Natural killer cell (primary cell): ENCODE measurements at regions of chr20 and their contacts with region 1.

Region 1: GRCh38 chr20:3000852-3001523 is 42.4 kb upstream of the GNRH2 start:
- DNase-seq: peak in 1 of 2 donors; percentile 68
- ATAC-seq: peak; percentile 73 to 94 (median 80)
- H3K4me3 ChIP-seq: no peak overlapping the region
- H3K4me3 Mint-ChIP-seq: no peak overlapping the region
- H3K27ac ChIP-seq: no peak overlapping the region
- H3K27ac Mint-ChIP-seq: peak overlapping the region in 1 of 2 donors; percentile 16
- H3K4me1 ChIP-seq: no peaks in the 10 kb centered on the region
- H3K4me1 Mint-ChIP-seq: no peaks in the 10 kb centered on the region
- H3K27me3 ChIP-seq: no peaks in the 10 kb centered on the region
- H3K27me3 Mint-ChIP-seq: no peaks in the 10 kb centered on the region
- CTCF ChIP-seq: peak; percentile 63

Region 2: GRCh38 chr20:2752567-2753460 is 248.2 kb before region 1 on chr20:
- intact Hi-C with region 1: loop called (anchors 5 kb)
- DNase-seq: peak; percentile 51 to 77
- ATAC-seq: peak; percentile 35 to 50 (median 48)
- H3K4me3 ChIP-seq: peak overlapping the region; percentile 32
- H3K4me3 Mint-ChIP-seq: peak overlapping the region; percentile 92
- H3K27ac ChIP-seq: no peak overlapping the region
- H3K27ac Mint-ChIP-seq: peak overlapping the region; percentile 45 to 70
- H3K4me1 ChIP-seq: peaks cover 45% of the 10 kb centered on the region
- H3K4me1 Mint-ChIP-seq: peaks cover 30 to 51% of the 10 kb centered on the region in 2 donors
- H3K27me3 ChIP-seq: peaks cover 18% of the 10 kb centered on the region
- H3K27me3 Mint-ChIP-seq: peaks cover 7 to 38% of the 10 kb centered on the region in 2 donors
- CTCF ChIP-seq: peak; percentile 83

Region 3: DNA sequence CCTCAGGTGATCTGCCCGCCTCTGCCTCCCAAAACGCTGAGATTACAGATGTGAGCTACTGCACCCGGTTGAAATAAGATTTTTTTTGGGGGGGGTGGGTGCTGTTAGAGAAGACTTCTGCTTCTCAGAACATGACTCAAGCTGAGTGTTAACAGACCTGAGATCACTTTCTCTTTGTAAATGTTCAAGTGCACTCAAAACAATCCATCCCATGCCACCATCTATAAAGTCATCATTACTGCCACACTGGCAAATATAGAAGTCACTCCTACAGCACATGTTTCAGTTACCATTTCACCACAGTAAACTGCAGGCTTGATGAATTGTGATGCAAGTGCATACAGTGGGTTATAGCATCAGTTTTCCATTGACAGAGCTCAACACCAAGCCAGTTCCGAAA is 151.5 kb before region 1 on chr20:
- intact Hi-C with region 1: loop called (anchors 5 kb)
- DNase-seq: no peak
- ATAC-seq: no peak
- H3K4me3 ChIP-seq: no peak overlapping the region
- H3K4me3 Mint-ChIP-seq: no peak overlapping the region
- H3K27ac ChIP-seq: no peak overlapping the region
- H3K27ac Mint-ChIP-seq: peak overlapping the region in 1 of 2 donors; percentile 90
- H3K4me1 ChIP-seq: peaks cover 23% of the 10 kb centered on the region
- H3K4me1 Mint-ChIP-seq: peaks cover 25 to 50% of the 10 kb centered on the region in 2 donors
- H3K27me3 ChIP-seq: no peaks in the 10 kb centered on the region
- H3K27me3 Mint-ChIP-seq: no peaks in the 10 kb centered on the region
- CTCF ChIP-seq: no peak

Region 4: GRCh38 chr20:2865630-2866029 is 135.4 kb before region 1 on chr20:
- intact Hi-C with region 1: loop called (anchors 2 kb)
- DNase-seq: peak; percentile 57 to 61
- ATAC-seq: peak; percentile 68 to 81 (median 76)
- H3K4me3 ChIP-seq: no peak overlapping the region
- H3K4me3 Mint-ChIP-seq: peak overlapping the region; percentile 82
- H3K27ac ChIP-seq: peak overlapping the region; percentile 63
- H3K27ac Mint-ChIP-seq: peak overlapping the region; percentile 89 to 97
- H3K4me1 ChIP-seq: peaks cover 55% of the 10 kb centered on the region
- H3K4me1 Mint-ChIP-seq: peaks cover 48 to 57% of the 10 kb centered on the region in 2 donors
- H3K27me3 ChIP-seq: no peaks in the 10 kb centered on the region
- H3K27me3 Mint-ChIP-seq: no peaks in the 10 kb centered on the region
- CTCF ChIP-seq: peak; percentile 55